GM18951 (cell line): ENCODE measurements at regions of chr11 and their contacts with region 1.

Region 1: GRCh38 chr11:10797531-10797930 is 11.2 kb downstream of the EIF4G2 start:
- POLR2A ChIP-seq: no peak

Region 2: GRCh38 chr11:11022125-11022730 is 224.7 kb after region 1 on chr11:
- in situ Hi-C with region 1: loop called (anchors 5 kb)
- POLR2A ChIP-seq: no peak